BJ (cell line): ENCODE measurements at regions of chr18 and their contacts with region 1.

Region 1: DNA sequence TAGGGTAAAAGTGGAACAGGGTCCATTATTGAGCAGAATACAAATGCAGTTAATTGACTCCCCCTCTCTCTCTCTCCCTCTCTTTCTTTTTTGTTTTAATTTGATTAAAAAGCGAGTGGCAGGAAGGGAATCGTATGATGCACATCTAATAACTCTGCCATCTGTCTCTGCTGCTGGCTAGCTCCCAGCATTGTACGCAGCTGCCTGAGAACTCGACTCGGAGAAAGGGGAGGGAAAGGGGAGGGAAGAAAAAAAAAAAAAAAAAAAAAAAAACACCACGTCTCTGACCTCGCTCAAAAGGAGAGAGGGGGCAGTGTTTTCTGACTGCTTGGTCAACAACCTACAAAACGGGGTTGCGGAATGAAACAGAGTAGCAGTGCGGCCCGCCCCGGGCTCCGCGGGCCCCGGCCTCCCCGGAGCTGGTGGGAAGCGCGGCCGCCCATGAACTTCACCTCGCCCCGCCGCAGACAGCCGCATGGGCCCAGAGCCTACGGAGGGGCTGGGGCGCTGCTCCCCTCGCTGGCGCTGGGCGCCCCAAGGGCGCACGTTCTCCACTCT is 265.7 kb downstream of the TCF4 start:
- DNase-seq: peak; percentile 74
- H3K4me3 ChIP-seq: peak overlapping the region; percentile 61
- H3K27me3 ChIP-seq: no peaks in the 10 kb centered on the region
- CTCF ChIP-seq: peak; percentile 15; the same call in 1 of the 2 replicates

Region 2: GRCh38 chr18:55421615-55422419 is 99.6 kb after region 1 on chr18:
- CTCF ChIA-PET with region 1: no interaction called
- POLR2A ChIA-PET with region 1: interaction called, 18 read pairs
- DNase-seq: no peak
- H3K4me3 ChIP-seq: peak overlapping the region; percentile 21
- H3K27me3 ChIP-seq: no peaks in the 10 kb centered on the region
- CTCF ChIP-seq: no peak